ENCODE measurements at regions of chr14 and their contacts with region 1.

Region 1: GRCh38 chr14:24431569-24432258 is 2.0 kb downstream of the KHNYN start:
- DNase-seq: peak; percentile 97
- H3K4me3 ChIP-seq: peak overlapping the region in 7 of 8 donors; percentile 64 to 91 (median 73)
- H3K27ac ChIP-seq: peak overlapping the region; percentile 97 to 100 (median 98)
- H3K4me1 ChIP-seq: peaks cover 29 to 86% (median 54%) of the 10 kb centered on the region in 6 donors
- H3K27me3 ChIP-seq: no peaks in the 10 kb centered on the region
- CTCF ChIP-seq: peak; percentile 87 to 98 (median 96)
- POLR2A ChIP-seq: no peak

Region 2: GRCh38 chr14:24339284-24340151 is 92.2 kb before region 1 on chr14 and contains the start of gene RIPK3:
- intact Hi-C with region 1: loop called (anchors 5 kb)
- DNase-seq: peak; percentile 95
- H3K4me3 ChIP-seq: peak within 1 kb of the TSS; percentile 41 to 83 (median 52)
- H3K27ac ChIP-seq: peak within 1 kb of the TSS; percentile 67 to 93 (median 80)
- H3K4me1 ChIP-seq: peaks cover 28 to 60% (median 44%) of the 10 kb centered on the region in 6 donors
- H3K27me3 ChIP-seq: peaks cover 0 to 10% (median 7%) of the 10 kb centered on the region in 7 donors
- CTCF ChIP-seq: no peak
- POLR2A ChIP-seq: no peak
- total RNA-seq, gene RIPK3: 24.8 to 42.4 (median 32.6) TPM